Posterior vena cava (tissue), 2 donors: ENCODE measurements at regions of chr6 and their contacts with region 1.

Region 1: DNA sequence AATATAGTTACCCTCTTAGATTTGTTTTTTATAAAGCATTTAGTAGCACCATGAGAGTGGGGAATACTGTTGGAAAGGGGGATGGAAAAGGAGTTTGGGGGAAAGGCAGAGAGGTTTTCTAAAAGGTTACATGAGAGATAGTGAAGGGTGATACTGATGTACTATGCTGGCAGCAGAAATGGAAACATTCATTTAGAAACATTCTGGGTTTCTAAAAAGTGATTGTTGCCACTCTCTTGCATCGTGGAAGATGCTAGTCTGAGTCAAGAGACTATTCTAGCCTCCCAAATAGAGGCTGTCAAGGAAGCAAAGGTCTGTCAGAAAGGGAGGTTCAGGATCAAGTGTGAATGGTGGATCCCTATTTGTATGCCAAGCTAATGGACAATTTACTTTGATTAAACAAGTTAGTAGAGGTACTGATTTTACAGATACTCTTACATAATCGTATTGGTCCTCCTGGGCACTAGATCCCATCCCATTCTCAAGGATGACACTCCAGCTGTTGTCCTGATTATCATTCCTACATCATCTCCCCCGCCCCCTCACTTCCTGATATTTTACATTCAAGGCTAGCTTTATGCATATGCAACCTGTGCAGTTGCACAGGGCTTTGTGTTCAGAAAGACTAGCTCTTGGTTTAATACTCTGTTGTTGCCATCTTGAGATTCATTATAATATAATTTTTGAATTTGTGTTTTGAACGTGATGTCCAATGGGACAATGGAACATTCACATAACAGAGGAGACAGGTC is 15.4 kb upstream of the ABT1 start:
- DNase-seq: no peak

Region 2: GRCh38 chr6:26342106-26343004 is 239.0 kb before region 1 on chr6:
- intact Hi-C with region 1: loop called in 1 of 2 experiments (anchors 10 kb)
- DNase-seq: no peak